Endothelial cell of umbilical vein (primary cell): ENCODE measurements at regions of chr3 and their contacts with region 1.

Region 1: GRCh38 chr3:131167867-131168266 is 141.2 kb downstream of the NEK11 start:
- DNase-seq: no peak
- H3K4me3 ChIP-seq: no peak overlapping the region
- H3K27ac ChIP-seq: no peak overlapping the region
- H3K4me1 ChIP-seq: no peaks in the 10 kb centered on the region
- H3K27me3 ChIP-seq: no peaks in the 10 kb centered on the region
- CTCF ChIP-seq: no peak
- POLR2A ChIP-seq: no peak

Region 2: GRCh38 chr3:131067983-131068382 is 99.9 kb before region 1 on chr3:
- CTCF ChIA-PET with region 1: no interaction called
- POLR2A ChIA-PET with region 1: no interaction called
- dilution Hi-C with region 1: no loop called
- intact Hi-C with region 1: no loop called
- DNase-seq: no peak
- H3K4me3 ChIP-seq: no peak overlapping the region
- H3K27ac ChIP-seq: no peak overlapping the region
- H3K4me1 ChIP-seq: peaks cover 9% of the 10 kb centered on the region
- H3K27me3 ChIP-seq: no peaks in the 10 kb centered on the region
- CTCF ChIP-seq: no peak
- POLR2A ChIP-seq: no peak

Region 3: GRCh38 chr3:131744765-131745164 is 576.9 kb after region 1 on chr3:
- CTCF ChIA-PET with region 1: no interaction called
- POLR2A ChIA-PET with region 1: no interaction called
- dilution Hi-C with region 1: no loop called
- intact Hi-C with region 1: loop called (anchors 10 kb)
- DNase-seq: no peak
- H3K4me3 ChIP-seq: no peak overlapping the region
- H3K27ac ChIP-seq: no peak overlapping the region
- H3K4me1 ChIP-seq: no peaks in the 10 kb centered on the region
- H3K27me3 ChIP-seq: no peaks in the 10 kb centered on the region
- CTCF ChIP-seq: no peak
- POLR2A ChIP-seq: no peak